AG04450 (cell line): ENCODE measurements at regions of chr9 and their contacts with region 1.

Region 1: GRCh38 chr9:6827439-6827838 is 69.7 kb downstream of the KDM4C start:
- DNase-seq: peak; percentile 13
- H3K4me3 ChIP-seq: no peak overlapping the region
- H3K27ac ChIP-seq: no peak overlapping the region
- H3K27me3 ChIP-seq: no peaks in the 10 kb centered on the region
- CTCF ChIP-seq: peak; percentile 72

Region 2: GRCh38 chr9:6723881-6724420 is 103.5 kb before region 1 on chr9:
- CTCF ChIA-PET with region 1: no interaction called
- POLR2A ChIA-PET with region 1: no interaction called
- DNase-seq: no peak
- H3K4me3 ChIP-seq: no peak overlapping the region
- H3K27ac ChIP-seq: no peak overlapping the region
- H3K27me3 ChIP-seq: no peaks in the 10 kb centered on the region
- CTCF ChIP-seq: no peak

Region 3: DNA sequence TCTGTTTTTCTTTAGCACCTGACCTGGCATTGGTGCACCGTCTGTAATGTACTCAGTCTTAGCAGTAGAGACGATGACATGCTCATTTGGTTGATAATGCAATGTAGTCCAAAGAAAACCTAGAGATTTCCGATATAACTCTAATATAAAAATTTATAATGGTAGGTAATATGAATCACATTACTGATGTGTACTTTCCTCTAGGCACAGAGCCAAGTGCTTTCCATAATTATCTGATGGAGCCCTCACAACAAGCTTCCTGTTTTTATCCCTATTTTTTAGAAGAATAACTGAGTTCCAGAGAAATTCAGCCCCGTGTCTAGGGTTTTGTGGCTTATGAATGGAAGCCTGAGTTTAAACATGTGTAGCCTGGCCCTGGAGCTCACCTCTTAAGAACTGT is 16.0 kb before region 1 on chr9:
- CTCF ChIA-PET with region 1: interaction called, 43 read pairs
- POLR2A ChIA-PET with region 1: no interaction called
- DNase-seq: no peak
- H3K4me3 ChIP-seq: no peak overlapping the region
- H3K27ac ChIP-seq: no peak overlapping the region
- H3K27me3 ChIP-seq: no peaks in the 10 kb centered on the region
- CTCF ChIP-seq: no peak

Region 4: GRCh38 chr9:6842584-6842947 is 15.1 kb after region 1 on chr9:
- CTCF ChIA-PET with region 1: interaction called, 25 read pairs
- POLR2A ChIA-PET with region 1: no interaction called
- DNase-seq: no peak
- H3K4me3 ChIP-seq: no peak overlapping the region
- H3K27ac ChIP-seq: no peak overlapping the region
- H3K27me3 ChIP-seq: no peaks in the 10 kb centered on the region
- CTCF ChIP-seq: no peak

Region 5: GRCh38 chr9:6873857-6874256 is 46.4 kb after region 1 on chr9:
- CTCF ChIA-PET with region 1: interaction called, 17 read pairs
- POLR2A ChIA-PET with region 1: no interaction called
- DNase-seq: peak; percentile 2
- H3K4me3 ChIP-seq: no peak overlapping the region
- H3K27ac ChIP-seq: no peak overlapping the region
- H3K27me3 ChIP-seq: no peaks in the 10 kb centered on the region
- CTCF ChIP-seq: no peak

Region 6: GRCh38 chr9:6897898-6898302 is 70.5 kb after region 1 on chr9:
- CTCF ChIA-PET with region 1: interaction called, 10 read pairs
- POLR2A ChIA-PET with region 1: no interaction called
- DNase-seq: no peak
- H3K4me3 ChIP-seq: no peak overlapping the region
- H3K27ac ChIP-seq: no peak overlapping the region
- H3K27me3 ChIP-seq: no peaks in the 10 kb centered on the region
- CTCF ChIP-seq: no peak

Region 7: GRCh38 chr9:6907772-6908381 is 80.4 kb after region 1 on chr9:
- CTCF ChIA-PET with region 1: interaction called, 22 read pairs
- POLR2A ChIA-PET with region 1: no interaction called
- DNase-seq: peak; percentile 13
- H3K4me3 ChIP-seq: no peak overlapping the region
- H3K27ac ChIP-seq: no peak overlapping the region
- H3K27me3 ChIP-seq: no peaks in the 10 kb centered on the region
- CTCF ChIP-seq: peak; percentile 90

Region 8: GRCh38 chr9:7094052-7094451 is 266.6 kb after region 1 on chr9:
- CTCF ChIA-PET with region 1: interaction called, 12 read pairs
- POLR2A ChIA-PET with region 1: no interaction called
- DNase-seq: no peak
- H3K4me3 ChIP-seq: no peak overlapping the region
- H3K27ac ChIP-seq: no peak overlapping the region
- H3K27me3 ChIP-seq: no peaks in the 10 kb centered on the region
- CTCF ChIP-seq: peak; percentile 55